MCF 10A (cell line): ENCODE measurements at regions of chr5 and their contacts with region 1.

Region 1: GRCh38 chr5:107571621-107572536 is 98.9 kb downstream of the EFNA5 start:
- DNase-seq: peak; percentile 98
- H3K4me3 Mint-ChIP-seq: peak overlapping the region; percentile 65
- H3K27ac Mint-ChIP-seq: peak overlapping the region; percentile 79
- H3K4me1 Mint-ChIP-seq: peaks cover 63% of the 10 kb centered on the region
- H3K27me3 Mint-ChIP-seq: no peaks in the 10 kb centered on the region
- CTCF ChIP-seq: peak; percentile 79

Region 2: DNA sequence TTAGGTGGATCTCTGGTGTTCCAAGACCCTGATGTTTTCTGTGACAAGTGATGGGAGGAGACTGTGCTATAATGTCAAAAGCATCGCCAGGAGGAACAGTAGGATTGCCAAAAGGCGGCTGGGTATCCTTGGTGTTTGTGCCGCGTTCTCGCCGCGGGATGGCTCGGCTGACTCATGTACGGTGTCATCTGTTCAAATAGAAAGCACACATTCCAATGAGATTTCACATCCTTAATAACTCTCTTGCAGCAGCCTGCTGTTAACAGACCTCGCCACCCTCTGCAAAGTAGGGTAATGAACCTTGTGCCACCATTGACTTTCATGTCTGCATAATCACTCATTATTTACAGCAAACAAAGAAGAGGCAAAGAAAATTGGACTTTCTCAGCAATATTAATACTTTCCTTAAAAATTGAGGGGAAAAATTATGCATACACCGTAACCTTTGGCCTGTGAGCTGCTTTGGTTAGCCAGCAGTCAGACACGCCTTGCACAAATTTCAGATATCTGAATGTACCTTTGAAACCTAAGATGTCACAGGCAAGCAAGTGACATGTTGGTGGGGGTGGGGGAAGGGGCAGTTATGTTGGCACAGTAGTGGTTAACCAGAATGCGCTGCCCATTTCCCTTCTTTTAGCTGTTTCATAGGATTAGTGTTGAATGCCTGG is 190.6 kb before region 1 on chr5:
- CTCF ChIA-PET with region 1: interaction called, 4 read pairs
- POLR2A ChIA-PET with region 1: interaction called, 7 read pairs
- intact Hi-C with region 1: loop called (anchors 1 kb)
- DNase-seq: peak; percentile 87
- H3K4me3 Mint-ChIP-seq: peak overlapping the region; percentile 29
- H3K27ac Mint-ChIP-seq: peak overlapping the region; percentile 78
- H3K4me1 Mint-ChIP-seq: peaks cover 41% of the 10 kb centered on the region
- H3K27me3 Mint-ChIP-seq: no peaks in the 10 kb centered on the region
- CTCF ChIP-seq: no peak

Region 3: DNA sequence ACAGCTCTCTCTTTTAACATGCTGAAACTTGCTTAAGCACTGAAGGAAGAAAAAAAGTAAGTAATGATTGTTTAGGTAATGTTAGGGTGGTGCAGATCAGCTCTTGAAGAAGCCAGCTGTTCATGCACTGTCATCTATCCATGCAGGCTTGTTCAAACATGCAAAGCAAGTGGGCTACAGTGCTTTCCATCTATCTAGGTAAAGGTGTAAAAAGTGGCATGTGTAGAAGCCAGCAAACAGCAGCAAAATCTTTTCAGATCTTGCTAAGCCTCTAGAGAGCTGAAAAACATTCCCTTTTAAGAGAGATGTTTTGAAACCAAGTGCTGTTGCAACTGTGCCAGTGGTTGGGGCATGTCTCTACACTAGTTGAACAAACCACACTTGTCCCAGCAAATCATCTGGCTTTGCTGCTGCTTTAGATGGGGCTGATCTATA is 115.6 kb before region 1 on chr5:
- CTCF ChIA-PET with region 1: interaction called, 6 read pairs
- POLR2A ChIA-PET with region 1: interaction called, 43 read pairs
- intact Hi-C with region 1: no loop called
- DNase-seq: peak; percentile 76
- H3K4me3 Mint-ChIP-seq: peak overlapping the region; percentile 6
- H3K27ac Mint-ChIP-seq: peak overlapping the region; percentile 64
- H3K4me1 Mint-ChIP-seq: peaks cover 56% of the 10 kb centered on the region
- H3K27me3 Mint-ChIP-seq: no peaks in the 10 kb centered on the region
- CTCF ChIP-seq: no peak

Region 4: DNA sequence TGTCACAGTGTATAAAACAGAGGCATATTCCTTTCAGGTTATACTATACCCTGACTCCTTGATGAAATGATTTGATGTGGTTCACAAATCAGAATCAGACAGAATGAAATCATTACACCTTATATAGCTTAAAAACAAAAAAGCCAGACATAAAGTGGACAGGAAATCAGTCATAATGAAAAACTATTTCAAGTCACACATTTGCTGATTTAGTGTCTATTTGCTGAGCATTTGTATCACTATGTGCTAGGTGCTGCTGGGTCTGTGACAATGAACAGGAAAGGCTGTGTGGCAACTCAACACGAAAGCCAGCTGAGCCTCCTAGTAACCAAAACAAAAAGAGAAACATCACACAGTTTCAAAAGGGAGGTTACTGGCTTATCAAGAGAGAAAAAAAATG is 95.1 kb before region 1 on chr5:
- CTCF ChIA-PET with region 1: interaction called, 7 read pairs
- POLR2A ChIA-PET with region 1: interaction called, 24 read pairs
- intact Hi-C with region 1: no loop called
- DNase-seq: peak; percentile 60
- H3K4me3 Mint-ChIP-seq: no peak overlapping the region
- H3K27ac Mint-ChIP-seq: peak overlapping the region; percentile 65
- H3K4me1 Mint-ChIP-seq: peaks cover 55% of the 10 kb centered on the region
- H3K27me3 Mint-ChIP-seq: no peaks in the 10 kb centered on the region
- CTCF ChIP-seq: no peak

Region 5: DNA sequence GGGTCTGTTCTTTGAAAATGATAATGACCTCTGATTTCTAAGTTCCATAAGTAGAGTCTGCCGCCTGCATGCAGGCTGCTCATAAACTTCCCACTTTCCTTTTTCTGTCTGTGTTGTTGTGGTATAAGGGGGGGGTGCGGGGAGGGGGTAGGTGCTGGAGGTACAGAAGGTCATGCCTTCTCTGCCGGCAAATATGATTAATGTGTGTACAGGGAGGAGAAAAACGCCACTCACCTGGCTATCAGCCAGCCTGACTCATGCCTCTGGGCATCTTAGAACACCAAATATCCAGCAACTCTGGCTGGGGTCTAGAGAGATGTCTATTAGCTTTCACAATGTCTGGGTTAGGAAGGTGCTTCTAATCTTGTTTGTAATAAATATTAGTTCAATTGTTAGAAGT is 29.5 kb before region 1 on chr5:
- CTCF ChIA-PET with region 1: interaction called, 13 read pairs
- POLR2A ChIA-PET with region 1: interaction called, 174 read pairs
- intact Hi-C with region 1: loop called (anchors 2 kb)
- DNase-seq: peak; percentile 99
- H3K4me3 Mint-ChIP-seq: peak overlapping the region; percentile 64
- H3K27ac Mint-ChIP-seq: peak overlapping the region; percentile 92
- H3K4me1 Mint-ChIP-seq: peaks cover 46% of the 10 kb centered on the region
- H3K27me3 Mint-ChIP-seq: no peaks in the 10 kb centered on the region
- CTCF ChIP-seq: no peak

Region 6: GRCh38 chr5:107594253-107595045 is 22.6 kb after region 1 on chr5:
- CTCF ChIA-PET with region 1: interaction called, 3 read pairs
- POLR2A ChIA-PET with region 1: interaction called, 28 read pairs
- intact Hi-C with region 1: no loop called
- DNase-seq: peak; percentile 63
- H3K4me3 Mint-ChIP-seq: peak overlapping the region; percentile 57
- H3K27ac Mint-ChIP-seq: peak overlapping the region; percentile 84
- H3K4me1 Mint-ChIP-seq: peaks cover 25% of the 10 kb centered on the region
- H3K27me3 Mint-ChIP-seq: no peaks in the 10 kb centered on the region
- CTCF ChIP-seq: no peak

Region 7: DNA sequence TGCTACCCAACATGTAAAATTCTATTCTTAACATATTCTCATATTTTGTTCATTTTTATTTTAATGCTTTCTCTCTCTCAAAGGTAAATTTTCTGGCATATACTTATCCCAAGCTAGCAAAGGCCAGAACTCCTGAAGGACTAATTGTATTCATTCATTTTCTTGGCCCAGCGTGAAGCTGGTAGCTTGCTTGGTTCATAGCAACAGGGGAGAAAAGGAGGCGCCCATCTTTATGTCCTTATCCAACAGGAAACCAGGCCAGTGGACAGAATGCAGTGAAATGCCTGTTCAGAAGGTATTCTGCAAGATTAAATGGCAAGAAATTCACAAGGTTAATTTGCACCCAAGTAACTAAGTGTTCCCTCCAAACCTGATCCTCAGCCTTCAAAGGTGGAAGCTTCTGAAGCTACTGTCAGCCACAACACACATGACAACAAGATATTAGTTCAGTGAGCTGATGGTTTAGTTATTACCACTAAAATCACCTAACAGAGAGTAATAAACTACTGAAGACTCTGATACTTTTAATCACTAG is 93.2 kb after region 1 on chr5:
- CTCF ChIA-PET with region 1: interaction called, 9 read pairs
- POLR2A ChIA-PET with region 1: interaction called, 205 read pairs
- intact Hi-C with region 1: no loop called
- DNase-seq: no peak
- H3K4me3 Mint-ChIP-seq: peak overlapping the region; percentile 21
- H3K27ac Mint-ChIP-seq: peak overlapping the region; percentile 26
- H3K4me1 Mint-ChIP-seq: peaks cover 26% of the 10 kb centered on the region
- H3K27me3 Mint-ChIP-seq: no peaks in the 10 kb centered on the region
- CTCF ChIP-seq: no peak

Region 8: DNA sequence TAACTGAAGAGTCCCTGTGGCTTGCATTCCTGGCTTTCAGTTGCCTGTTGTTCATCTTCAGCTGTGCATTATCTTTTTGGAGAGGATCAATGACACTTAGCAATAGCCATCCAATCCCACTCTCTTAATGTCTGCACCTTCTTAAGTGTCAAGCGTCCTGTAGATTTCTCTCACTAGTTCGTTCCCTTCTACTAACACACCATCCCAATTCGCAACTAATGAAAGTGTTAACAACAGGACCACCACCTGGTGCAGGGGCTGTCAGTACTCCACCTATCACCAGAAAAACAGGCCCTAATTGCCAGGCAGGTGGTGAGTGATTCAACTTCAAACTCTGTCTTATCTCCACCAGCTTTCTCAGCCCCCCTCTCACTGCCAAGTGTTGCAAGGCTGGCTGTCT is 268.3 kb after region 1 on chr5:
- CTCF ChIA-PET with region 1: no interaction called
- POLR2A ChIA-PET with region 1: no interaction called
- intact Hi-C with region 1: no loop called
- DNase-seq: no peak
- H3K4me3 Mint-ChIP-seq: no peak overlapping the region
- H3K27ac Mint-ChIP-seq: no peak overlapping the region
- H3K4me1 Mint-ChIP-seq: no peaks in the 10 kb centered on the region
- H3K27me3 Mint-ChIP-seq: peaks cover 46% of the 10 kb centered on the region
- CTCF ChIP-seq: no peak

Region 9: GRCh38 chr5:108421713-108422112 is 849.8 kb after region 1 on chr5:
- CTCF ChIA-PET with region 1: no interaction called
- POLR2A ChIA-PET with region 1: no interaction called
- intact Hi-C with region 1: no loop called
- DNase-seq: no peak
- H3K4me3 Mint-ChIP-seq: no peak overlapping the region
- H3K27ac Mint-ChIP-seq: no peak overlapping the region
- H3K4me1 Mint-ChIP-seq: no peaks in the 10 kb centered on the region
- H3K27me3 Mint-ChIP-seq: no peaks in the 10 kb centered on the region
- CTCF ChIP-seq: no peak